CD4-positive, alpha-beta T cell (primary cell): ENCODE measurements at regions of chr3 and their contacts with region 1.

Region 1: DNA sequence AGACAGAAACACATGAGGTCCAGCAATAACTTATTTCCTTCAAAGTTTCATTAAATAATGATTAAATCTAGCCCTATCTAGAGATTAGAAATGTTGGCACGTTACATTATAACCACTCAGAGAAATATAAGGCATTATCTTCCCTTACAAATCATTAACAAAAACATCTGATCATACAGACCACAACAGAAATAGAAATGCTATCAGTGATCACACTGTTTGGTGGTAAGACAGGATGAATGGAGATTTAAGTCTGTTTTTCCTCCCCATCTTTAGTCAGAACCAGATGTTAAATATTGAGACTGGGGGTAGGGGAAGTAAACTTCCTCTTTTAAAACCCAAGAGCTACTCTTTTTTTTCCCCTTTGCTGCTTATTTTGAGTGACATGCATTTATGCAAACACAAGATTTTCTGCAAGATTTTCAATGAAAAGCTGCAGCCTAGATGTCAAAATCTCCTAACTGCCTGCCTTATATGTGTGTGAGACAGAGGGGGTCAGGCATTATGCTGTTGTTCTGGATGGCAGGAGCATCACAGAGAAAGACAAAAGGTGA is 70.4 kb downstream of the CBLB start:
- DNase-seq: peak in 2 of 14 experiments; percentile 21 to 37
- ATAC-seq: peak; percentile 58
- H3K4me3 ChIP-seq: no peak overlapping the region
- H3K4me3 Mint-ChIP-seq: peak overlapping the region; percentile 16
- H3K27ac ChIP-seq: no peak overlapping the region
- H3K27ac Mint-ChIP-seq: peak overlapping the region; percentile 46
- H3K4me1 ChIP-seq: peaks cover 14% of the 10 kb centered on the region
- H3K4me1 Mint-ChIP-seq: peaks cover 84% of the 10 kb centered on the region
- H3K27me3 ChIP-seq: no peaks in the 10 kb centered on the region
- H3K27me3 Mint-ChIP-seq: no peaks in the 10 kb centered on the region
- CTCF ChIP-seq: no peak

Region 2: DNA sequence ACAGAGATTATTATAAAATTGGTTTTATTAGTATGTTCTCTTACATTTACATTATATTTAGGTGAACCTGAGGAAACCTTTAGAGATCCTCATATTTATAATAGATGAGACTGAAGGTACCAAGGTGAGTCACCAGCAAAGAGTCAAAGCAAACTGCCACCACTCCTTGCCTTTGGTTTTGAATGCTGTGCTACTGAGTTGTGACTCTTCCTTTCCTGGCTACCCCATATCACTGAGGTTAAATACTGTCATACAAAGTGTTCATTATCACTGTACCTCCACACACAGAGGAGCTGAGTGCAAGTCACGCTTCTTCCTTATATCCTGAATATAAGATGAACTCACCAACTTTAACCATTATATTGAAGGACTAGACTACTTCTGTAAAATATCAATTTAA is 97.9 kb before region 1 on chr3:
- CTCF ChIA-PET with region 1: no interaction called
- POLR2A ChIA-PET with region 1: no interaction called
- intact Hi-C with region 1: no loop called
- DNase-seq: peak in 1 of 14 experiments; percentile 26
- ATAC-seq: no peak
- H3K4me3 ChIP-seq: no peak overlapping the region
- H3K4me3 Mint-ChIP-seq: no peak overlapping the region
- H3K27ac ChIP-seq: no peak overlapping the region
- H3K27ac Mint-ChIP-seq: peak overlapping the region; percentile 25
- H3K4me1 ChIP-seq: no peaks in the 10 kb centered on the region
- H3K4me1 Mint-ChIP-seq: peaks cover 36% of the 10 kb centered on the region
- H3K27me3 ChIP-seq: no peaks in the 10 kb centered on the region
- H3K27me3 Mint-ChIP-seq: no peaks in the 10 kb centered on the region
- CTCF ChIP-seq: no peak

Region 3: GRCh38 chr3:105747060-105747541 is 51.4 kb before region 1 on chr3:
- CTCF ChIA-PET with region 1: no interaction called
- POLR2A ChIA-PET with region 1: interaction called, 6 read pairs
- intact Hi-C with region 1: loop called in 1 of 2 experiments (anchors 2 kb)
- DNase-seq: peak in 3 of 14 experiments; percentile 50 to 73 (median 60)
- ATAC-seq: peak; percentile 77
- H3K4me3 ChIP-seq: no peak overlapping the region
- H3K4me3 Mint-ChIP-seq: peak overlapping the region; percentile 49
- H3K27ac ChIP-seq: peak overlapping the region in 1 of 2 donors; percentile 35
- H3K27ac Mint-ChIP-seq: peak overlapping the region; percentile 94
- H3K4me1 ChIP-seq: peaks cover 26% of the 10 kb centered on the region
- H3K4me1 Mint-ChIP-seq: peaks cover 78% of the 10 kb centered on the region
- H3K27me3 ChIP-seq: no peaks in the 10 kb centered on the region
- H3K27me3 Mint-ChIP-seq: no peaks in the 10 kb centered on the region
- CTCF ChIP-seq: no peak

Region 4: GRCh38 chr3:105781871-105782270 is 16.6 kb before region 1 on chr3:
- CTCF ChIA-PET with region 1: no interaction called
- POLR2A ChIA-PET with region 1: interaction called, 3 read pairs
- intact Hi-C with region 1: loop called in 1 of 2 experiments (anchors 2 kb)
- DNase-seq: no peak
- ATAC-seq: no peak
- H3K4me3 ChIP-seq: no peak overlapping the region
- H3K4me3 Mint-ChIP-seq: peak overlapping the region; percentile 5
- H3K27ac ChIP-seq: no peak overlapping the region
- H3K27ac Mint-ChIP-seq: peak overlapping the region; percentile 48
- H3K4me1 ChIP-seq: peaks cover 10% of the 10 kb centered on the region
- H3K4me1 Mint-ChIP-seq: peaks cover 64% of the 10 kb centered on the region
- H3K27me3 ChIP-seq: no peaks in the 10 kb centered on the region
- H3K27me3 Mint-ChIP-seq: no peaks in the 10 kb centered on the region
- CTCF ChIP-seq: no peak